ENCODE measurements at regions of chr5 and their contacts with region 1.

Region 1: DNA sequence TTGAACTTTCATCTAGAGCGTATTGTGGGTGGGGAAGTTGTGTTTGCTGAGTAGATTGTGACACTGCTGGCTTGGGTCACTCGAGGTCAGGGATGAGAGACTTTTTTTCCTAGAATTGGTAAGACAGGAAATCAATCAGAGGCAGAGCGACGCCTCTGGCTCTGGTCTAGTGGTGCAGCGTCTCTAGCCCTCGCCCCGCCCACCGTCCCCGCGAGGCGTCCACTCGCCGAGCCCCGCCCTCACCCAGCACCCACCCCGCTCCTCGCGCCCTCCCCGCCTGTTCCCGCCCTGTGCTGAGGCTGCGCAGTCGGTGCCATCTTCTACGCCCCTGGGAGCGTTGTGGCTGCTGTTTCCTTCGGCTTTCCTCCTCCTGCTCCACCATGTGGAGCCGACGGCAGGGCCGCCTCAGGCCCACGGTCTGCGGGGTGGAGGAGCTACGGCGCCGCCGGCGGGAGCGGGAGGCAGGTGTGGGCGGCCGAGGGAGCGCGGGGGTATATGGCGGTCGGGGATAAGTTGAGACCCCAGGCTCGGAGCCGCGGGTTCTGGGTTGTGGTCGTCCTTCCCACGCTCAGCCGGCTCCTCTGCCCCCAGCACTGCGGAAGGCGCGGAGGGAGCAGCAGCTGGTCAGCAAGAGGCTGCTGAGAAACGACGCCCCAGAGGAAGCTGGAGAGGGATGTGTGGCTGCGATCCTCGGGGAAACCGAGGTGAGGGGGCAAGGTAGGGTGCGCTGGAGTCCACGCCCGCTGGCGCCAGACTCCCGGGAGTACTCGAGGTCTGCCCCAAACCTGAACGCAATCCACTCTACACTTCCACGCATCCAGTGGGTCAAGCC is at the start of gene TMCO6:
- DNase-seq: peak; percentile 99 to 100 (median 99)
- ATAC-seq: peak; percentile 90 to 98 (median 93)
- H3K4me3 ChIP-seq: peak within 1 kb of the TSS; percentile 77 to 91 (median 82)
- H3K27ac ChIP-seq: peak within 1 kb of the TSS; percentile 89 to 97 (median 94)
- H3K4me1 ChIP-seq: peaks cover 0 to 35% (median 14%) of the 10 kb centered on the region in 4 donors
- H3K27me3 ChIP-seq: no peaks in the 10 kb centered on the region
- CTCF ChIP-seq: peak; percentile 45 to 68 (median 62)
- POLR2A ChIP-seq: peak; percentile 69
- total RNA-seq, gene TMCO6: 7.3 to 45.5 (median 23.6) TPM

Region 2: DNA sequence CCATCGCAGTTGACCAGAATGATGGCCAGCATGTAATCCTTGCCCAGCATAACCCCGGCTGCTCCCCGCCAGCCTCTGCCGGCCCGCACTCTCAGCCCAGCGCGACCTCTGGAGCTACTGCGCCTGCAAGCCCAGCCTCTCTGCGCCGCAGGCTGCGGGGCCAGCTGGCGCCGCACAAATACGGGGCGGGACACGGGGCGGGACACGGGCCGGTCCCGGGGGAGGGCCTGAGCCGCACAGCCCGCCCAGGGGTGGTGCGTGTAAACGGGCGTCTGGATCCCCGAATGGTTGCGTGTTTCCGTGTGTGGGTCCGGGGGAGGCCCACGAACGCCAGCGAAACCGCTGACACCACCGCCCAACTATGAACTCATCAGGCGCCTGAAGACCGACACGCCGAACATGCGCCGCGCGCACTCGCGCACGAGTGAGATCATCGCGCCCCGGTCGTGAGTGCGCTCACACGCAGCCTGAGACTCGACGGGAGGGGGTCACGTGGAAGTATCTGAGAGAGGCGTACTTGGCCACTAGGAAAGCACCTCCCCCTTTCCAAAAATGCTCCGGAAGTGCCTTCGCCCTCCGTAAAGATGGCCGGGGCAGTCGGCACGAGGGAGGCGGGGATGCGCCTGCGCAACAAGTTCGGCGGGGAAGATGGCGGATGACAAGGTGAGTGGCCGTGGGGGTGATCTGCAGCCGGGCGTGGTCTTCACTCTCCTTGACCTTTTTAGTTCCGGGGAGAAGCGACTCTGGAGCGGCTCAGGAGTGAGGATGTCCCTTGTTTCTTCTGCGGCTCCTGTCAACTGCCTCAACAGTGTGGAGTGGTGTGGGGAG is 75.0 kb before region 1 on chr5 and contains the starts of genes APBB3 and SLC35A4:
- intact Hi-C with region 1: loop called (anchors 10 kb)
- DNase-seq: peak; percentile 95 to 97 (median 97)
- ATAC-seq: peak; percentile 80 to 92 (median 84)
- H3K4me3 ChIP-seq: peak within 1 kb of the TSS; percentile 74 to 87 (median 76)
- H3K27ac ChIP-seq: peak within 1 kb of the TSS; percentile 84 to 94 (median 87)
- H3K4me1 ChIP-seq: peaks cover 0 to 53% (median 25%) of the 10 kb centered on the region in 4 donors
- H3K27me3 ChIP-seq: no peaks in the 10 kb centered on the region
- CTCF ChIP-seq: peak in 1 of 4 donors; percentile 2
- POLR2A ChIP-seq: peak; percentile 92
- total RNA-seq, gene APBB3: 9.6 to 24.3 (median 14.3) TPM
- total RNA-seq, gene SLC35A4: 28.1 to 38.5 (median 30.2) TPM